Activated CD4-positive, alpha-beta T cell treated with anti-CD3 and anti-CD28 coated beads for 36 hours (primary cell): ENCODE measurements at regions of chr1 and their contacts with region 1.

Region 1: GRCh38 chr1:1491601-1492000 is 20.0 kb downstream of the ATAD3B start:
- DNase-seq: no peak
- ATAC-seq: no peak
- H3K4me3 Mint-ChIP-seq: no peak overlapping the region
- H3K27ac Mint-ChIP-seq: no peak overlapping the region
- H3K4me1 Mint-ChIP-seq: no peaks in the 10 kb centered on the region
- H3K27me3 Mint-ChIP-seq: no peaks in the 10 kb centered on the region

Region 2: DNA sequence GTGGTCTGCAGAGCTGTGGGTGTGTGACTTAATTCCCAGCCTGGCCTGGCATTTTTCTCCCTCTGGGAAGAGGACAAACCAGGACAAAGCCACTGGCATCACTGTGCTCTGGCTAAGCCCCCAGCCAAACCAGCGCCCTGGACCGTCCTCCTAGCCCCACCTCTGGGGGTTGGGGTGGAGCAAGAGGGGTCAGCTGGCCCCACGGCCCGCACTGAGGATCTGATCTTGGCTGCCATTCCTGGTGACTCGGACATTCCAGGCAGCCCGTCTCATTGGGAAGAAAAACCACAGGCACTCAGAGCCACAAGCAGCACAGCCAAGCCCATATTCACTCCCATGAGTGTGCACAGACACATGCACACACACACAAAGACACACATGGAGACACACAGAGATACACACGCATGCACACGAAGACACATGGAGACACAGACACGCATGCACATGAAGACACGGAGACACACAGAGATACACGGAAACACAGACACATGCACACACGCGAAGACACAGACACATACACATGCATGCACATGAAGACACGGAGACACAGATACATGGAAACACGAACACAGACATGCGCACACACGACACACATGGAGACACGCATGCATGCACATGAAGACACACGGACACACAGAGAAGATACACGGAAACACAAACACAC is 131.0 kb before region 1 on chr1:
- CTCF ChIA-PET with region 1: no interaction called
- POLR2A ChIA-PET with region 1: no interaction called
- intact Hi-C with region 1: no loop called
- DNase-seq: no peak
- ATAC-seq: no peak
- H3K4me3 Mint-ChIP-seq: no peak overlapping the region
- H3K27ac Mint-ChIP-seq: no peak overlapping the region
- H3K4me1 Mint-ChIP-seq: peaks cover 10% of the 10 kb centered on the region
- H3K27me3 Mint-ChIP-seq: peaks cover 7% of the 10 kb centered on the region

Region 3: DNA sequence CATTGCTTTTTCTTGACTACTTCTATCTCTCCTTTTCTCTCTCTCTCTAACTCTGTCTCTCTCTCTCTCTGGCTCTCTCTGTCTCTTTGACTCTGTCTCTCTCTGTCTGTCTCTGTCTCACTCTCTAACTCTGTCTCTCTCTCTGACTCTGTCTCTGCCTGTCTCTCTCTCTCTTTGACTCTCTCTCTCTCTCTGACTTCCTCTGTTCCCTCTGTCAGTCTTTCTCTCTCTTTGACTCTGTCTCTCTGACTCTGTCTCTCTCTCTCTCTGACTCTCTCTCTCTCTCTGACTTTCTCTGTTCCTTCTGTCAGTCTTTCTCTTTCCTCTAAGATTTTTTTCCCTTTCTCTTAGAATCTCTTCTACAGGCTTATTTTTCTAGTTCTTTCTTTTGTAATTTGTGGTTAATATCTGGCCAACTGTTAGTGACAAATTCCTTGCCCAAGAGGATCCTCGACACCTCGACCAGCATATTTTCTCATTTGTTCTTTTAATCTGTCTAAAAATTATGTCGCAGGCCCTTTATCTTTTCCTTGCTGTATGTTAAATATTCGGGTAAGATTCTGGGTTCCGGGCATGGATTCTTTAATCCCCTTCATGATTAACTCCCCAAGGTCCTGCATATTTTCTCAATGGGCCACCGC is 42.4 kb before region 1 on chr1 and contains the start of gene ATAD3C:
- CTCF ChIA-PET with region 1: no interaction called
- POLR2A ChIA-PET with region 1: no interaction called
- intact Hi-C with region 1: loop called in 1 of 2 experiments (anchors 2 kb)
- DNase-seq: no peak
- ATAC-seq: no peak
- H3K4me3 Mint-ChIP-seq: no peak within 1 kb of the TSS
- H3K27ac Mint-ChIP-seq: no peak within 1 kb of the TSS
- H3K4me1 Mint-ChIP-seq: no peaks in the 10 kb centered on the region
- H3K27me3 Mint-ChIP-seq: no peaks in the 10 kb centered on the region
- total RNA-seq, gene ATAD3C: 0.30 to 0.39 TPM

Region 4: GRCh38 chr1:1517973-1518620 is 26.5 kb after region 1 on chr1:
- CTCF ChIA-PET with region 1: no interaction called
- POLR2A ChIA-PET with region 1: no interaction called
- intact Hi-C with region 1: no loop called
- DNase-seq: no peak
- ATAC-seq: no peak
- H3K4me3 Mint-ChIP-seq: no peak overlapping the region
- H3K27ac Mint-ChIP-seq: no peak overlapping the region
- H3K4me1 Mint-ChIP-seq: peaks cover 2% of the 10 kb centered on the region
- H3K27me3 Mint-ChIP-seq: no peaks in the 10 kb centered on the region